Body of pancreas (tissue), 4 donors: ENCODE measurements at regions of chr2 and their contacts with region 1.

Region 1: GRCh38 chr2:50167271-50167670 is 864.7 kb downstream of the NRXN1 start:
- DNase-seq: no peak
- ATAC-seq: no peak
- H3K4me3 ChIP-seq: no peak overlapping the region
- H3K27ac ChIP-seq: no peak overlapping the region
- H3K4me1 ChIP-seq: no peaks in the 10 kb centered on the region
- H3K27me3 ChIP-seq: no peaks in the 10 kb centered on the region
- CTCF ChIP-seq: no peak
- POLR2A ChIP-seq: no peak

Region 2: GRCh38 chr2:49656853-49657252 is 510.4 kb before region 1 on chr2:
- intact Hi-C with region 1: loop called (anchors 5 kb)
- DNase-seq: no peak
- ATAC-seq: no peak
- H3K4me3 ChIP-seq: no peak overlapping the region
- H3K27ac ChIP-seq: no peak overlapping the region
- H3K4me1 ChIP-seq: no peaks in the 10 kb centered on the region
- H3K27me3 ChIP-seq: no peaks in the 10 kb centered on the region
- CTCF ChIP-seq: no peak
- POLR2A ChIP-seq: no peak

Region 3: GRCh38 chr2:50263728-50264127 is 96.5 kb after region 1 on chr2:
- intact Hi-C with region 1: no loop called
- DNase-seq: no peak
- ATAC-seq: no peak
- H3K4me3 ChIP-seq: no peak overlapping the region
- H3K27ac ChIP-seq: no peak overlapping the region
- H3K4me1 ChIP-seq: no peaks in the 10 kb centered on the region
- H3K27me3 ChIP-seq: no peaks in the 10 kb centered on the region
- CTCF ChIP-seq: no peak
- POLR2A ChIP-seq: no peak